BJ (cell line): ENCODE measurements at regions of chr1 and their contacts with region 1.

Region 1: GRCh38 chr1:205003393-205004131 is 39.5 kb upstream of the CNTN2 start:
- DNase-seq: no peak
- H3K4me3 ChIP-seq: no peak overlapping the region
- H3K27me3 ChIP-seq: no peaks in the 10 kb centered on the region
- CTCF ChIP-seq: no peak

Region 2: GRCh38 chr1:204989266-204990058 is 14.1 kb before region 1 on chr1:
- CTCF ChIA-PET with region 1: interaction called, 20 read pairs
- POLR2A ChIA-PET with region 1: no interaction called
- DNase-seq: peak; percentile 16
- H3K4me3 ChIP-seq: no peak overlapping the region
- H3K27me3 ChIP-seq: no peaks in the 10 kb centered on the region
- CTCF ChIP-seq: peak; percentile 99

Region 3: DNA sequence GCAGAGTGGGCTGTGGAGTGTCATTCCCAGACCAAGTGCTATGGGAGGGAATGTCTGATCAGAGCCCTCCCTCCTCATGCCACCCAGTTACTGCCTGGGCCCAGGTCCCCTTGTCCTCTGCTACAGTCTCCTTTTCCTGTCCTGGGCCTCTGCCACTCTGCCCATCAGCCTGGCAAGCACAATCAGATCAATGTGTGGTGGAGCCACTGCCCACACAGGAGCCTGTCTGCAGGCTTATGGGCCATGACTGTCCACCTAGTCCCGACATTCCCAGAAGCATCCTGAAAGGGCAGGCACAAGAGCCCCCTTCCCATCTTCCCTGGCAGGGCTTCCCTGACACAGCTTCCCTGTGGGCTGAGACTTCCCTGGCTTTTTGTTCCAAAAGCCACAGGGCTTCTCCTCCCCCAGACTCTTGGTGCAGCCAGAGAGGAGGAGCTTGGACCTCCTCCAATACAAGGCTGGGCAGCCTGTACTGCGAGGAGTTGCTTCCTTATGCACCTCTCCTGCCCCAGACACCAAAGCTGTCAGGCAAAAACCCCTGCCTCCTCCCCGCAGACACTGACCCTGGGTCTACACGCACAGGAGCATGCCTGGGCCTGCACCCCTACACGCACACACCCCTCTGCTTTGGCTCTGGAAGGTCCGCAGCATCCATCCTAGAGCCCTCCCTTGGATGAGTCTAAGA is 10.3 kb after region 1 on chr1:
- CTCF ChIA-PET with region 1: no interaction called
- POLR2A ChIA-PET with region 1: interaction called, 24 read pairs
- DNase-seq: no peak
- H3K4me3 ChIP-seq: no peak overlapping the region
- H3K27me3 ChIP-seq: no peaks in the 10 kb centered on the region; the same call in 1 of the 2 replicates
- CTCF ChIP-seq: no peak

Region 4: GRCh38 chr1:205111354-205111753 is 107.8 kb after region 1 on chr1:
- CTCF ChIA-PET with region 1: no interaction called
- POLR2A ChIA-PET with region 1: no interaction called
- DNase-seq: no peak
- H3K4me3 ChIP-seq: no peak overlapping the region
- H3K27me3 ChIP-seq: no peaks in the 10 kb centered on the region
- CTCF ChIP-seq: no peak